Cardiac septum (tissue), 1 donor: ENCODE measurements at regions of chr2 and their contacts with region 1.

Region 1: DNA sequence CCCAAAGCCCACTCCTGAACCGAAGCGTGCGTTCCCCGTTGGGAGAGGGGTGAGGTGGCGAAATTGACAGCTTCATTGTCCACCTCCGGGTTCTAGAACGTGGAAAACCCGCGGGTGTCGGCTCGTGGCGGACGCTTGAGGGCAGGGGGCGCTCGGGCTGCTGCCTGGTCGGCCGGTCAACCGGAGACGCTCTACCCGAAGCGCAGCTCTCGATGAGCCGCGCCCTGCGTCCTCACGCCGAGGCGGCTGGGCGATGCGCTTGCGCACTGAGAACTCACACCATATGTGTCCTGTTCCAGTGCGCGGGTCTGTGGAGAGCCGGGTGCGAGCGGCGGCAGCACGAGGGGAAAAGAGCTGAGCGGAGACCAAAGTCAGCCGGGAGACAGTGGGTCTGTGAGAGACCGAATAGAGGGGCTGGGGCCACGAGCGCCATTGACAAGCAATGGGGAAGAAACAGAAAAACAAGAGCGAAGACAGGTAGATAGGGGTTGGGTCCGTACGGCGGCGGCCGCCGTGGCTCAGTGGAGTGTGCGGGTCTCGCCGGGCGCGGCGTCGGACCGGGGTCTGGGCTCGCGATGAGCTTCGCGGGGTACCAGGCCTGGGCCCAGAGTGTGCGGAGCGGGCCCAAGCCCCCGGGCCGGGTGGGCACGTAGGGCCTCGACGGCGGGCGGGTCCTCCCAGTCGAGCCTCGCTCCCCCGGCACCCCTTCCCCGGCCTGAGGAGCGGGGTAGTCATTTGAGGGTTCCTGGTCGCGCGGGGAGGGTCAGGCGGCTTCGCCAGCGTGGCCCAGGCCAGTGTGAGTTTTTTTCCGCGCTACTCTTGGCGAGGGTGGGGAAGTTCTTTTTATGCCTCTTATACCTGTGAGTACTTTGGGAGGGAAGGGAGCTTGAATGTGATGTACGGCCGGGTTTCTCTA is at the start of gene EIF5B:
- DNase-seq: peak; percentile 98
- total RNA-seq, gene EIF5B: 105 TPM

Region 2: DNA sequence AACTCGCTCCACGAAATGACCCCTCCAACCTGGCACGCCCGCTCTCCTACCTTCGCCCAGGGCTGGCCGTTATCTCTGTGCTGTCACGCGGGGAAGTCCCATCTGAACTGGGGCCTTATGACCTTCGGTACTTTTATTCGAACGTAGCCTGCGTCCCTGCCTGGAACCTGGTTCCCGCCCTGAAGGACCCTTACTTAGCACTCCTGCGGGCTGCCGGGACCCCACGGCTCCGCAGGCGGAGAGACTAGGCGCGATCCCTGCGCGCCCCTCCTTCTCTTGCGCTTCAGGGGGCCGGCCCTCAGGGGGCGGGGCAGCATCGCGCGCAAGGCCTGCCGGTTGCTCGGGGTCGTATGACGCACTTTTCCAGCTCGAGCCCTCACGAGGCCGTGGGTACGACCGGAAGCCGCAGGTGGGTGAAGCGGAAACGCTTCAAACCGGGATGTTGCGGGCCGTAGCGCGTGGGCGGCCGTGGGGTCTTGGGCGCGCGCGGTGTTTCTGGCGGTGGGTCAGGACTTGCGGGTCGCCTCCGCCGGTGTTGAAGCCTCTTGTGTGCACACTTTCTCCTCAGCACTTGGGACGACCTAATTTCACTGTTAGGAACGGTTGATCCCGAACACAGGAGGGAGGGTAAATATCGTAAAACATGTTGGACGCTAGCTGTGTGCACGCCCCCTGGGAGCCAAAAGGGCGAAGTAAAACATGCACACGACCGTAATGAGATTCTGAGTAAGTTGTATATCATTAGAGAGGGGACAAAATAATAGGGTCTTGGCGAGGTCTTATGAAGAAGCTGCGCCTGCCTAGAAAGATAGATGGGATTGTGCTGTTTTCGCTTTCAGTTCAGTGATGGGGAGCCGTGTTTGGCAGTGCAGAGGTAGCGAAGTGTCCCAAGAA is 182.5 kb before region 1 on chr2 and contains the starts of genes LIPT1 and TSGA10:
- intact Hi-C with region 1: loop called (anchors 2 kb)
- DNase-seq: peak; percentile 93
- total RNA-seq, gene LIPT1: 6.6 TPM
- total RNA-seq, gene TSGA10: 1.6 TPM

Region 3: GRCh38 chr2:99180755-99181623 is 156.4 kb before region 1 on chr2 and contains the starts of genes MITD1 and MRPL30:
- intact Hi-C with region 1: loop called (anchors 2 kb)
- DNase-seq: peak; percentile 96
- total RNA-seq, gene MITD1: 11.4 TPM
- total RNA-seq, gene MRPL30: 27.8 TPM

Region 4: GRCh38 chr2:99403524-99403923 is 66.2 kb after region 1 on chr2:
- intact Hi-C with region 1: loop called (anchors 5 kb)
- DNase-seq: no peak

Region 5: DNA sequence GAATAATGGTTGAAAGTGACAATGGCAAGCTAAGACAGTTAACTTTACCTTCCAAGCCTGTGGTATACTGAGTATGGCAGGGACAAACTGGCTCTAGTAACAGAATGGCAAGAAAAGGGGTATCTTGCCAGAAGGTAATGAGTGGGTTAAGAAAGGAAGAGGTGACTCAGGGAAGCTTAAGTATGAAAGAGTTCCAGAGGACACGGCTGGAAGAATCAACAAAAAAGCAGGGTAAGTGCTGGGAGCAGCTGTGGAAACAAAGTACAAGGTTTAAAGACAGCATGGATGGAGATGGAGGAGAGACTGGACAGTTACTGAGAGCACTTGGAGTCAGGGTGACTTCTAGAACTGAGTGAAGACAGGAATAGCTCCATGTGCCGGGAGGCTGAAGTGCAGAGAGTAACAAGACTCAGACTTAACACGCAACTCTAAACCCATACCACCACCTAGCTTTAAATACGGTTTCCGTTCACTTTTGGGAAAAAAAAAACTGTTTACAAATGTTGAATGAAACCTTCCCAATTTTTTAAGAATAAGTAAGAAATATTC is 83.5 kb after region 1 on chr2:
- intact Hi-C with region 1: loop called (anchors 5 kb)
- DNase-seq: no peak

Region 6: GRCh38 chr2:99489761-99490622 is 152.6 kb after region 1 on chr2 and contains the start of gene REV1:
- intact Hi-C with region 1: loop called (anchors 1 kb)
- DNase-seq: peak; percentile 96
- total RNA-seq, gene REV1: 34.1 TPM